Testis (tissue), 5 donors: ENCODE measurements at regions of chr17 and their contacts with region 1.

Region 1: GRCh38 chr17:38410201-38410600 is 18.1 kb upstream of the ARHGAP23 start:
- DNase-seq: no peak
- H3K4me3 ChIP-seq: no peak overlapping the region
- H3K27ac ChIP-seq: no peak overlapping the region
- H3K4me1 ChIP-seq: no peaks in the 10 kb centered on the region
- H3K27me3 ChIP-seq: no peaks in the 10 kb centered on the region
- CTCF ChIP-seq: no peak
- POLR2A ChIP-seq: no peak

Region 2: GRCh38 chr17:38351412-38352222 is 58.6 kb before region 1 on chr17 and contains the start of gene SOCS7:
- intact Hi-C with region 1: loop called (anchors 5 kb)
- DNase-seq: peak; percentile 96
- H3K4me3 ChIP-seq: peak within 1 kb of the TSS; percentile 83 to 98
- H3K27ac ChIP-seq: peak within 1 kb of the TSS; percentile 77 to 90
- H3K4me1 ChIP-seq: peaks cover 25% of the 10 kb centered on the region
- H3K27me3 ChIP-seq: no peaks in the 10 kb centered on the region
- CTCF ChIP-seq: no peak
- POLR2A ChIP-seq: no peak
- total RNA-seq, gene SOCS7: 74.9 to 132 TPM

Region 3: GRCh38 chr17:38533866-38534497 is 123.8 kb after region 1 on chr17:
- intact Hi-C with region 1: no loop called
- DNase-seq: no peak
- H3K4me3 ChIP-seq: no peak overlapping the region
- H3K27ac ChIP-seq: no peak overlapping the region
- H3K4me1 ChIP-seq: no peaks in the 10 kb centered on the region
- H3K27me3 ChIP-seq: no peaks in the 10 kb centered on the region
- CTCF ChIP-seq: no peak
- POLR2A ChIP-seq: no peak

Region 4: DNA sequence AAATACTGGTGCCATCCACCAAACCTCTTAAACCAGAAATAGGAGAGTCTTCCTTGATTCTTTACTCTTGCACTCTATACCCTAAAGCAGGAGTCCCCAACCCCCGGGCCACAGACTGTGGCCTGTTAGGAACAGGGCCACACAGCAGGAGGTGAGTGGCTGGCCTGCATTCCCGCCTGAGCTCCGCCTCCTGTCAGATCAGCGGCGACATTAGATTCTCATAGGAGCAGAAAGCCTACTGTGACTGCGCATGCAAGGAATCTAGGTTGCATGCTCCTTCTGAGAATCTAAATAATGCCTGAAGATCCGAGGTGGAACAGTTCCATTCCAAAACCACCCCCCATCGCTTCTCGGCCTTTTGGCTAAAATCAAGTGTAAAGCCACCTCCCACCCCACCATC is 225.9 kb after region 1 on chr17:
- intact Hi-C with region 1: no loop called
- DNase-seq: peak; percentile 12
- H3K4me3 ChIP-seq: no peak overlapping the region
- H3K27ac ChIP-seq: no peak overlapping the region
- H3K4me1 ChIP-seq: no peaks in the 10 kb centered on the region
- H3K27me3 ChIP-seq: no peaks in the 10 kb centered on the region
- CTCF ChIP-seq: no peak
- POLR2A ChIP-seq: no peak

Region 5: DNA sequence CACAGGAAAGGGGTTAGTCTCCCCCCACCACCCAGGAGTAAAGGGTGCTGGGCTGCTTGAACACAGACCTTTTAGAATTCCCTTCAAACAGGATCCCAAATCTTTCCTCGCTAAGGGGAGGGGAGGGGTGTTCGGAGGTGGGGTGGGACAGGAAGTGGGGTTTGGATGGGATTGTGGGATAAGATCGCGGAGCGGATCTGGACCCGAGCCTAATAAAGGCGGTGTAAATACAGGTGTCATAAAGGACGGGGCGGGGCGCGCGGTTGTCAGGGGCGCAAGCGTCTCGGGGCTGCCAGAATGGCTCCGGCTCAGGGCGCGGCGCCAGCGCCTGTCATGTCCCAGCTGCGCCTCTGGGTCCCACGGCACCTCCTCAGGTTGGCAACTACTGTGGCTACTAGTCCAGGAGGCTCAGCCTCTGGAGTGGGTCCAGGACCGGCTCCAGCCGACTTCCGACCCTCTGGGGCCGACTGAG is 616.8 kb after region 1 on chr17:
- intact Hi-C with region 1: no loop called
- DNase-seq: peak; percentile 69
- H3K4me3 ChIP-seq: peak overlapping the region; percentile 34 to 58
- H3K27ac ChIP-seq: no peak overlapping the region
- H3K4me1 ChIP-seq: peaks cover 11% of the 10 kb centered on the region
- H3K27me3 ChIP-seq: no peaks in the 10 kb centered on the region
- CTCF ChIP-seq: no peak
- POLR2A ChIP-seq: no peak